CD14-positive monocyte (primary cell): ENCODE measurements at regions of chr13 and their contacts with region 1.

Region 1: DNA sequence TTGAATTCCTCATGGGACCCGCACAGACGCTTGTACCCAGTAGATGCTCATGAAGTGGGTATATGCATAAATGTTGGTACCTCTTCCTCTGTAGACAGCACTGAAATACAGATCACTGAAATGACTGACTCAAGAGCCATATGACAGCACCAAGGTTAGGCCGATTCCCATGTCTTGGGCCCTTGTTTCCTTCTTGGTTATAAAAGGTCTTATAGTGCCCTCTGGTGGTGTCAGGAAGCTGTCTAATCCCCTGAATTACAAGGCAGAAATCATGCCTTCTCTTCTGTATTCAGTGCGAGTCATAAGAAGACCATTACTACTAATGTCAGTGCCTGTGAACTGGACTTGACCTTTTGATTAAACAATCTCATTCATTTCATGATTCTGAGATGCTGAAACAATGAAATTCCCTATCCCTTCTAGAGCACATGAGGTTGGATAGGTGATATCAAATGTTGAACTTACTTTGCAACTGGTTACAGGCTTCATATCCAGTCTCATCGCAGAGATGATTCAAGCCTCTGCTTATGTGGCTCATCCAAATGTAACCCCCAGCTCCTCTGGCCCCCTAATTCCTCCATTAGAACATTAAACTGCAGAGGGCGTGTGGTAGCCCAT is 59.7 kb downstream of the SPATA13 start:
- DNase-seq: peak; percentile 71 to 80 (median 80)
- H3K4me3 ChIP-seq: no peak overlapping the region
- H3K4me3 Mint-ChIP-seq: no peak overlapping the region
- H3K27ac ChIP-seq: no peak overlapping the region
- H3K27ac Mint-ChIP-seq: no peak overlapping the region
- H3K4me1 ChIP-seq: peaks cover 16 to 22% of the 10 kb centered on the region in 2 donors
- H3K4me1 Mint-ChIP-seq: peaks cover 32% of the 10 kb centered on the region
- H3K27me3 ChIP-seq: no peaks in the 10 kb centered on the region
- H3K27me3 Mint-ChIP-seq: peaks cover 0 to 10% (median 3%) of the 10 kb centered on the region in 3 donors
- CTCF ChIP-seq: peak; percentile 72

Region 2: DNA sequence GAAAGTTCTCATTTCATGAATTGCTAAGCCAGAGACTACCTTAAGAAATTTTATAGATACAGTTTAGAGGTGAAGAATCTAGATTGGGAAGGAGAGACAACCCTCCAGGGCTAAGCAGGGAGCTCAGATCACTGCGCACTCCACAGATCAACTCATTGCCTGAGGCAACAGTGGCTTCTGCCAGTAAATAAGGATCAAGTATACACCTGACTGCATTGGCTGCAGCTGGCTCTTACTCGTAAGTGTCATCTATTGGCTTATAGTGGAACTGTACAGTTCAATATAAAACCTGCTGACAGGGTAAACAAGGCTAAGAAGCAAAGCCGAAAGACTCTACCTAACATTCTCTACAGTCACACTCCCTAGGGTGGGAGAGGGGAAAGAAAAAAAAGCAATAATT is 304.9 kb before region 1 on chr13:
- intact Hi-C with region 1: loop called (anchors 5 to 10 kb)
- DNase-seq: no peak
- H3K4me3 ChIP-seq: no peak overlapping the region
- H3K4me3 Mint-ChIP-seq: no peak overlapping the region
- H3K27ac ChIP-seq: no peak overlapping the region
- H3K27ac Mint-ChIP-seq: no peak overlapping the region
- H3K4me1 ChIP-seq: no peaks in the 10 kb centered on the region
- H3K4me1 Mint-ChIP-seq: peaks cover 4% of the 10 kb centered on the region
- H3K27me3 ChIP-seq: no peaks in the 10 kb centered on the region
- H3K27me3 Mint-ChIP-seq: peaks cover 2 to 5% (median 3%) of the 10 kb centered on the region in 3 donors
- CTCF ChIP-seq: no peak

Region 3: GRCh38 chr13:23921451-23921888 is 298.7 kb before region 1 on chr13:
- intact Hi-C with region 1: loop called (anchors 5 to 10 kb)
- DNase-seq: peak; percentile 13 to 51 (median 37)
- H3K4me3 ChIP-seq: no peak overlapping the region
- H3K4me3 Mint-ChIP-seq: no peak overlapping the region
- H3K27ac ChIP-seq: no peak overlapping the region
- H3K27ac Mint-ChIP-seq: no peak overlapping the region
- H3K4me1 ChIP-seq: peaks cover 10 to 11% of the 10 kb centered on the region in 2 donors
- H3K4me1 Mint-ChIP-seq: peaks cover 14% of the 10 kb centered on the region
- H3K27me3 ChIP-seq: no peaks in the 10 kb centered on the region
- H3K27me3 Mint-ChIP-seq: peaks cover 0 to 5% (median 3%) of the 10 kb centered on the region in 3 donors
- CTCF ChIP-seq: peak; percentile 79

Region 4: GRCh38 chr13:24020375-24020830 is 199.8 kb before region 1 on chr13:
- intact Hi-C with region 1: loop called (anchors 2 to 10 kb)
- DNase-seq: peak in 2 of 3 donors; percentile 8 to 22
- H3K4me3 ChIP-seq: no peak overlapping the region
- H3K4me3 Mint-ChIP-seq: no peak overlapping the region
- H3K27ac ChIP-seq: no peak overlapping the region
- H3K27ac Mint-ChIP-seq: no peak overlapping the region
- H3K4me1 ChIP-seq: no peaks in the 10 kb centered on the region
- H3K4me1 Mint-ChIP-seq: no peaks in the 10 kb centered on the region
- H3K27me3 ChIP-seq: no peaks in the 10 kb centered on the region
- H3K27me3 Mint-ChIP-seq: peaks cover 0 to 3% (median 0%) of the 10 kb centered on the region in 3 donors
- CTCF ChIP-seq: peak; percentile 49

Region 5: DNA sequence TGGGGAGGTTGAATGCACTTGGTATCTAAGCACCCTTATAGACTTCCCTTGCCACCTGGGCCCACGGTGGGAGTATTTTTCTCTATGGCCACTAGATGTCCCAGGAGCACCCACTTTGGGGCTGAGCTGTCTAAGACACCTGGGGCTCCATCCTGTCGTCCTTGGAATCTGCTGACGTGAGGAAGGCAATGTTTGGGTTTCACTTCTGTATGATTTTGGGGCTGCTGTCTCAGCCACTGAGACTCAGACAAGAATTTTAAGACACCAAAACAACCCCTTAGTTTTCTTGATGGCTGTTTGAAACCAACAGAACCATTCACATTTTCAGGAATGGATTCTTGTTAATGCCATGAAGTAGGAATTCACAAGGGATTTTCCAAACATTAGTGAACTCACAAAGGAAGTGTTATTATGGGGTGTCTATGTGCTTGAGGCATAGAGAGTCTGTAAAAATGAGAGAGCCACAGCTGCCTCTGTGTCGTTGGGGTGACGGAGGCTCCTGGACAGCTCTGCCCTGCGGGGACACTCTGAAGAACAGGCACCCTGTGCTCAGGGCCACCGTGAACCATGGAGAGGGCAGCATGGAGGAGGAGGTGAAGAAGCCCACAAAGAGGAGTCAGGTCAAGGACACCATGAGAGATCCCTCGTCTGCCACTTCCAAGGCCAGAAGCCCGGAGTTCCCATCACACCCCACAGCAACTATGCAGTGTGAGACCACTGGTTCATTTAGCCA is 166.5 kb before region 1 on chr13:
- intact Hi-C with region 1: loop called in 1 of 2 experiments (anchors 10 kb)
- DNase-seq: peak; percentile 15 to 48 (median 41)
- H3K4me3 ChIP-seq: no peak overlapping the region
- H3K4me3 Mint-ChIP-seq: no peak overlapping the region
- H3K27ac ChIP-seq: no peak overlapping the region
- H3K27ac Mint-ChIP-seq: no peak overlapping the region
- H3K4me1 ChIP-seq: no peaks in the 10 kb centered on the region
- H3K4me1 Mint-ChIP-seq: peaks cover 7% of the 10 kb centered on the region
- H3K27me3 ChIP-seq: no peaks in the 10 kb centered on the region
- H3K27me3 Mint-ChIP-seq: peaks cover 0 to 1% (median 0%) of the 10 kb centered on the region in 3 donors
- CTCF ChIP-seq: peak; percentile 63

Region 6: GRCh38 chr13:24168392-24168750 is 51.8 kb before region 1 on chr13:
- intact Hi-C with region 1: no loop called
- DNase-seq: no peak
- H3K4me3 ChIP-seq: no peak overlapping the region
- H3K4me3 Mint-ChIP-seq: no peak overlapping the region
- H3K27ac ChIP-seq: no peak overlapping the region
- H3K27ac Mint-ChIP-seq: no peak overlapping the region
- H3K4me1 ChIP-seq: no peaks in the 10 kb centered on the region
- H3K4me1 Mint-ChIP-seq: no peaks in the 10 kb centered on the region
- H3K27me3 ChIP-seq: no peaks in the 10 kb centered on the region
- H3K27me3 Mint-ChIP-seq: peaks cover 0 to 4% (median 0%) of the 10 kb centered on the region in 3 donors
- CTCF ChIP-seq: no peak

Region 7: DNA sequence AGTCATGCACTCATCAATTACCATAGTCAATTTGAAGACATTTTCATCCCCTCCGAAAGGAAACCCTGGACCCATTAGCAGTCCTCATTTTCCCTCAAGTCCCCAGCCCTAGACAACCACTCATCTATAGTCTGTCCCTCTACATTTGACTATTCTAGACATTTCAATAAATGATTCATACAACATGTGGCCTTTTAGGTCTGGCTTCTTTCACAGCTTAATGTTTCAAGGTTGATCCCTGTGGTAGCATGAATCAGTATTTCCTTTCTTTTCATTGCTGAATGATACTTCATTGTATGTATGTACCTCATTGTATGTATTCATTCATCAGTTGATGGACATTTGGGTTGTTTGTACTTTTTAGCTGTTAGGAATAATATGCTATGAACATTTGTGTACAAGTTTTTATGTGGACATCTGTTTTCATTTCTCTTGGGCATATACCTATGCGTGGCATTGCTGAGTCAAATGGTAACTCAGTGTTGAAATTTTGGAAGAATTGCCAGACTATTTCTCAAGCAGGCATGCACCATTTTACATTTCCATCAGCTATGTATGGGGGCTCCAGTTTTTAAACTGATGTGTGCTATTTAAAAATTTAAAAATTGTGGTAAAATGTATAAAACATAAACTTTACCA is 41.2 kb before region 1 on chr13:
- intact Hi-C with region 1: loop called in 1 of 2 experiments (anchors 5 kb)
- DNase-seq: no peak
- H3K4me3 ChIP-seq: no peak overlapping the region
- H3K4me3 Mint-ChIP-seq: no peak overlapping the region
- H3K27ac ChIP-seq: no peak overlapping the region
- H3K27ac Mint-ChIP-seq: no peak overlapping the region
- H3K4me1 ChIP-seq: no peaks in the 10 kb centered on the region
- H3K4me1 Mint-ChIP-seq: peaks cover 3% of the 10 kb centered on the region
- H3K27me3 ChIP-seq: no peaks in the 10 kb centered on the region
- H3K27me3 Mint-ChIP-seq: peaks cover 0 to 1% (median 0%) of the 10 kb centered on the region in 3 donors
- CTCF ChIP-seq: no peak

Region 8: GRCh38 chr13:24875561-24875960 is 655.4 kb after region 1 on chr13:
- intact Hi-C with region 1: no loop called
- DNase-seq: no peak
- H3K4me3 ChIP-seq: no peak overlapping the region
- H3K4me3 Mint-ChIP-seq: no peak overlapping the region
- H3K27ac ChIP-seq: no peak overlapping the region
- H3K27ac Mint-ChIP-seq: peak overlapping the region in 1 of 7 donors; percentile 23
- H3K4me1 ChIP-seq: no peaks in the 10 kb centered on the region
- H3K4me1 Mint-ChIP-seq: no peaks in the 10 kb centered on the region
- H3K27me3 ChIP-seq: no peaks in the 10 kb centered on the region
- H3K27me3 Mint-ChIP-seq: peaks cover 0 to 4% (median 0%) of the 10 kb centered on the region in 3 donors
- CTCF ChIP-seq: no peak